ENCODE measurements at regions of chr6 and their contacts with region 1.

Region 1: DNA sequence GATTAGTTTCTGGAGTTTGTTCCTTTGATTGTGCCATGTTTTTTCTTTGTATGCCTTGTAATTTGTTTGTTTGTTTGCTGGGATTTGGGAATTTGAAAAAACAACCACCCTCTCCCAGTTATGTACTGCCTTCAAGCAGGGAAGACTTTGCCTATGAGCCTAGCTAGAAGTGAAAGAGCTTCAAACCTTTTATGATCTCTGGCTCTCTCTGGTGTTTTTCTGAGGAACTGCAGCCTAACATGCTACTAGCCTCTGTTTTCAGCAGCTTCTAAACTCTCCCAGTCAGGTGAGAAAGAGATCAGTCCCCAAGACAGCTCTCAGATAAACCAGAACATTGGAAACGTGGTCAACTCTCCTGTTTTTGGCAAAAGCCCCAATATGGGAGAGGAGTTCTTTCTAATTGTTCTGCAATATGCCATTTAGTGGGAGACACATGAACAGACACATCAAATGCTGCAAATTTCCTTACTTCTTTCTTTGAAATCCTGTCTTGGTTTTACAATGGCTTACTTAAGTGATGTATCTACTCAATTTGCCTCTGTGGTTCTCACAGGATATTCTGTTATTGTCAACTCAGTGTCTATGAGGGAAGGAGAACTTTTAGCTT is 58.9 kb upstream of the SERINC1 start:
- H3K4me3 ChIP-seq: no peak overlapping the region
- H3K27ac ChIP-seq: no peak overlapping the region
- H3K4me1 ChIP-seq: no peaks in the 10 kb centered on the region
- CTCF ChIP-seq: peak; percentile 35; the same call in 1 of the 2 replicates

Region 2: DNA sequence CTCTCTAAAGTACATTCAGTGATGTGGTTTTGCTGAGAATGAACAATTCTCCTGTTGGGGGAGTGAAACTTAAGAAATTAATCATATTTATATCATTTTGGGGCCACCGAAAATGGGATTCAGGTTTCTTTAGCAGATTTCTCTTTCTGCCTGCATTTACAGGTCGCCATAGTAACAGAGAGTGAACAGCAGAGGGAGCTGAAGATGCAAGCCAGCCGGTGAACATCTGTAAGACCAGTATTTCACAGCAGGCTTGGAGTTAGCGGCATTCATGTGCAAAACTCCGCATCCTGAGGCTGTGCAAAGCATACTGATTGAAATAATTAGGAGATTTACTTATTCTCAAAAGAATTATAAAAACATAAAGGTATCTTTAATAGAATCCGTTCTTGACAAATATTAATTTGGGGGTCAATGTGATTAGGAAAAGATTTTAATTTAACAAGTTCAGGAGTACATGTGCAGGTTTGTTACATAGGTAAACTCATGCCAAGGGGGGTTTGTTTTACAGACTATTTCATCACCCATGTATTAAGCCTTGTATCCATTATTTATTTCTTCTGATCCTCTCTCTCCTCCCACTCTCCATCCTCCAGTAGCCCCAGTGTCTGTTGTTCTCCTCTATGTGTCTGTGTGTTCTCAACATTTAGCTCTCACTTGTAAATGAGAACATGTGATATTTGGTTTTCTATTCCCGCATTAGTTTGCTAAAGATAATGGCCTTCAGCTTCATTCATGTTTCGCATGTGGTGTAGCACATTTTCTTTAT is 148.9 kb before region 1 on chr6:
- CTCF ChIA-PET with region 1: interaction called, 42 read pairs
- POLR2A ChIA-PET with region 1: no interaction called
- H3K4me3 ChIP-seq: no peak overlapping the region
- H3K27ac ChIP-seq: no peak overlapping the region
- H3K4me1 ChIP-seq: no peaks in the 10 kb centered on the region
- CTCF ChIP-seq: peak; percentile 46

Region 3: GRCh38 chr6:122471107-122472021 is 59.2 kb before region 1 on chr6 and contains the start of gene SERINC1:
- CTCF ChIA-PET with region 1: interaction called, 26 read pairs
- POLR2A ChIA-PET with region 1: no interaction called
- H3K4me3 ChIP-seq: peak within 1 kb of the TSS; percentile 66
- H3K27ac ChIP-seq: peak within 1 kb of the TSS; percentile 49
- H3K4me1 ChIP-seq: 0 out of 2 replicates have a peak, but pooled peaks cover 4% of the 10 kb centered on the region
- CTCF ChIP-seq: no peak

Region 4: DNA sequence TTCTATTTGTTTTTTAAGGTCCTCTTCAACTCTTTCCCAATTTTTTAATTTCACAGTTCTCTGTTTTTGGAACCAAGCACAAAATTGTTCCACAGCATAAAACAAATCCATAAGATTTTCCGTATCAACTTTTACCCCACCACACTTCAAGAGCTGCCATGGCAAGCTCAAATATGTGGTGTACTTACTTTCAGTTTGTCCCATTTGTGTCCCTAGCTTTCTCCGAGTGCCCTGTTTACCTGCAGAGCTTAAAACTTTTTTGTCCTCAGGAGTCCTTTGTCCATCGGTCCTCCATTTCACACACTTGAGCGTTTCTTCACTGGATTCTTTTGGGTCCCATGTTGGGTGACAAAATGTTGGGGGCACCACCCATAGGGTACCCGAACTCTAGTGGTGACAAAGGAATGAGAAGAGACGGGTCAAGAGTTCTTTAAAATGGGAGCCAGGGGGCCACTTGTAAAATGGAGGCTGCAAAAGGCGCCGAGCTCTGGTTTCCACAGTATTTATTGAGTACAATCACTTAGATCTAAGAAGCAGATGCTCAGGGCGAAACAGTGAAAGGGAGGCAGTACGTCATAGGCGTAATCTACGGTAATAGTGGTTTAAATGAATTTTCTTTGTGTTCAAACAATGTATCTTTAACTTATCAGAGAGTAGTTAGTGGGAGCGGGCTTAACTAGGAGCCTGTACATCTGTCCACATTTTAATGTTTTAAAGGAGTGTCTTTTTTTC is 19.2 kb before region 1 on chr6:
- CTCF ChIA-PET with region 1: interaction called, 24 read pairs
- POLR2A ChIA-PET with region 1: no interaction called
- H3K4me3 ChIP-seq: no peak overlapping the region
- H3K27ac ChIP-seq: no peak overlapping the region
- H3K4me1 ChIP-seq: no peaks in the 10 kb centered on the region
- CTCF ChIP-seq: no peak

Measured in HEK293 (cell line).